Activated CD8-positive, alpha-beta T cell treated with anti-CD3 and anti-CD28 coated beads for 36 hours (primary cell): ENCODE measurements at regions of chr18 and their contacts with region 1.

Region 1: DNA sequence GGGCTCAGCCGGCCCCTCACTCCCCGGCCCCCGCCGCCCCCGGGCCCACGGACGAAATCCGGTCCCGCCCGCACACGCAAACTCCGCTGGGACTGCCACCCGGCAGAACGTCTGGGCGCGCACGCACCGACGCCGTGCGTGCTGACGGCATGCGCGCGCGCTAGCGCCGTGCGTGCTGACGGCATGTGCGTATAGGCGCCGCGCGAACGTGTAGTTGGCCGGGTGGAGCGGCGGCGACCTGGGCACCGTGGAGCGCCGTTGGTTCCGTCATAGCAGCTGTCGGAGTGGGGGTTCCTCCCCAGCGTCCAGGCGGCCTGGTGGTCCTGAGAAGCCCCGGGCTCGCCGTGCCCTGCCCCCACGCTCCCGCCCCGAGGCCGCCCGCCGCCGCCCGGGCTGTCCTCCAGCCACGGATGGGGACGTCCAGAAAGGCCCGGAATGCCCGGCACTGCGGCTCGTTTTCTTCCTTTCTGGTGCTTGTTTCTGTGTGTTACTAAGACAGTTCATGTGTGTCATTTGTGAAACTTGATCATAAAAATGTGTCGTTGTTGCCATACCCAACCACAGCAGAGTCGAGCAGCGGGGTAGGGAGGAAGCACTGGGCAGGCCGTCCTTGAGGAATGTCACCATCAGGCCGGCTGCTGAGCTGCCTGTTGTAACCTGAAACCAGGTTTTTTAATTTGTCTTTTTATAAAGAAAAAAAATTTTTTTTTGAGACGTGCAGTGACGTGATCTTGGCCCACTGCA is at the start of gene TXNL4A:
- DNase-seq: peak; percentile 88
- ATAC-seq: peak; percentile 97
- H3K4me3 Mint-ChIP-seq: peak within 1 kb of the TSS; percentile 91
- H3K27ac Mint-ChIP-seq: peak within 1 kb of the TSS; percentile 96
- H3K4me1 Mint-ChIP-seq: peaks cover 30% of the 10 kb centered on the region
- H3K27me3 Mint-ChIP-seq: no peaks in the 10 kb centered on the region
- CTCF ChIP-seq: no peak
- total RNA-seq, gene TXNL4A: 172 to 189 TPM

Region 2: DNA sequence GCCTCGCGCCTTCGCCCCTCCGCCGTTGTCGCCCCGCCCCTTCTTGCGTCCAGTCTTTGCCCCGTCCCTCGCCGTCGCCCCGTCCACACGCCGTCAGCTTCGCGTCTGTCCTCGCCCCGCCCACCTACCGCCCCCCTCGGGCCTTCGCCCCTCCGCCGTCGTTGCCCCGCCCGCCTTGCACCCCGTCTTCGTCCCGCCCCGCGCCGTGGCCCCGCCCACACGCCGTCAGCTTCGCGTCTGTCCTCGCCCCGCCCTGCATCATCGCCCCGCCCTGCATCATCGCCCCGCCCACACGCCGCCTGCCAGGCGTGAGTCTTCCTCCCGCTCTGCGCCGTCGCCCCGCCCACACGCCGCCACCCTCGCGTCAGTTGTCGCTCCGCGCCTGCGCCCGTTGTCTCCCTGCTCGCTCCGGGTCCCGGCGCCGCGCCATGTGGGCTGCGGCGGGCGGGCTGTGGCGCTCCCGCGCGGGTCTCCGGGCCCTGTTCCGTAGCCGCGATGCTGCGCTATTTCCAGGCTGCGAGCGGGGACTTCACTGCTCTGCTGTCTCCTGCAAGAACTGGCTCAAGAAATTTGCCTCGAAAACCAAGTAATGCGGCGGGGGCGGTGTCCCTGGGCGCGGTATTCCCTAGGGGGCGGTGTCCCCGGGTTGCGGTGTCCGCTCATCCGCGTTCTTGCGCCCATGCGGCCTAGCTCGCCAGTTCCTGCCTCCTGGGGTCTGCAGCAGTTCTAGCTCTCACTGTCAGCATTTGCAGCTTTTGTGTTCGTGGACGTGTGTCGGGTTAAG is 45.6 kb after region 1 on chr18 and contains the start of gene RBFA:
- CTCF ChIA-PET with region 1: no interaction called
- POLR2A ChIA-PET with region 1: interaction called, 5 read pairs
- intact Hi-C with region 1: loop called (anchors 5 kb)
- DNase-seq: peak; percentile 100
- ATAC-seq: peak; percentile 88
- H3K4me3 Mint-ChIP-seq: peak within 1 kb of the TSS; percentile 90
- H3K27ac Mint-ChIP-seq: peak within 1 kb of the TSS; percentile 91
- H3K4me1 Mint-ChIP-seq: peaks cover 31% of the 10 kb centered on the region
- H3K27me3 Mint-ChIP-seq: no peaks in the 10 kb centered on the region
- CTCF ChIP-seq: peak; percentile 55
- total RNA-seq, gene RBFA: 41.7 to 45.5 TPM

Region 3: GRCh38 chr18:80108728-80109675 is 120.4 kb after region 1 on chr18 and contains the start of gene ADNP2:
- CTCF ChIA-PET with region 1: no interaction called
- POLR2A ChIA-PET with region 1: interaction called, 12 read pairs
- intact Hi-C with region 1: no loop called
- DNase-seq: peak; percentile 94
- ATAC-seq: peak; percentile 84
- H3K4me3 Mint-ChIP-seq: peak within 1 kb of the TSS; percentile 85
- H3K27ac Mint-ChIP-seq: peak within 1 kb of the TSS; percentile 90
- H3K4me1 Mint-ChIP-seq: peaks cover 47% of the 10 kb centered on the region
- H3K27me3 Mint-ChIP-seq: no peaks in the 10 kb centered on the region
- CTCF ChIP-seq: no peak
- total RNA-seq, gene ADNP2: 22.1 to 22.5 TPM